ENCODE measurements at regions of chr17 and their contacts with region 1.

Region 1: GRCh38 chr17:35189291-35189690 is 4.9 kb downstream of the SLC35G3 start:
- DNase-seq: peak; percentile 74 to 84 (median 82)
- H3K4me3 ChIP-seq: no peak overlapping the region
- H3K4me3 Mint-ChIP-seq: no peak overlapping the region
- H3K27ac ChIP-seq: peak overlapping the region in 1 of 2 donors; percentile 38
- H3K27ac Mint-ChIP-seq: peak overlapping the region in 3 of 7 donors; percentile 2 to 21 (median 5)
- H3K4me1 ChIP-seq: peaks cover 7 to 30% of the 10 kb centered on the region in 2 donors
- H3K4me1 Mint-ChIP-seq: peaks cover 25% of the 10 kb centered on the region
- H3K27me3 ChIP-seq: peaks cover 0 to 3% of the 10 kb centered on the region in 2 donors
- H3K27me3 Mint-ChIP-seq: peaks cover 9 to 23% (median 16%) of the 10 kb centered on the region in 3 donors
- CTCF ChIP-seq: no peak

Region 2: GRCh38 chr17:35242805-35243560 is 53.7 kb after region 1 on chr17 and contains the start of gene SLFN5:
- intact Hi-C with region 1: loop called in 1 of 2 experiments (anchors 5 kb)
- DNase-seq: peak; percentile 89 to 94 (median 92)
- H3K4me3 ChIP-seq: peak within 1 kb of the TSS; percentile 77 to 94 (median 86)
- H3K4me3 Mint-ChIP-seq: peak within 1 kb of the TSS; percentile 95 to 97
- H3K27ac ChIP-seq: peak within 1 kb of the TSS; percentile 94 to 97
- H3K27ac Mint-ChIP-seq: peak within 1 kb of the TSS; percentile 95 to 99 (median 97)
- H3K4me1 ChIP-seq: peaks cover 30 to 46% of the 10 kb centered on the region in 2 donors
- H3K4me1 Mint-ChIP-seq: peaks cover 41% of the 10 kb centered on the region
- H3K27me3 ChIP-seq: no peaks in the 10 kb centered on the region
- H3K27me3 Mint-ChIP-seq: peaks cover 11 to 15% (median 12%) of the 10 kb centered on the region in 3 donors
- CTCF ChIP-seq: no peak
- polyA plus RNA-seq, gene SLFN5: 2.9 to 8.8 (median 5.3) TPM

Region 3: DNA sequence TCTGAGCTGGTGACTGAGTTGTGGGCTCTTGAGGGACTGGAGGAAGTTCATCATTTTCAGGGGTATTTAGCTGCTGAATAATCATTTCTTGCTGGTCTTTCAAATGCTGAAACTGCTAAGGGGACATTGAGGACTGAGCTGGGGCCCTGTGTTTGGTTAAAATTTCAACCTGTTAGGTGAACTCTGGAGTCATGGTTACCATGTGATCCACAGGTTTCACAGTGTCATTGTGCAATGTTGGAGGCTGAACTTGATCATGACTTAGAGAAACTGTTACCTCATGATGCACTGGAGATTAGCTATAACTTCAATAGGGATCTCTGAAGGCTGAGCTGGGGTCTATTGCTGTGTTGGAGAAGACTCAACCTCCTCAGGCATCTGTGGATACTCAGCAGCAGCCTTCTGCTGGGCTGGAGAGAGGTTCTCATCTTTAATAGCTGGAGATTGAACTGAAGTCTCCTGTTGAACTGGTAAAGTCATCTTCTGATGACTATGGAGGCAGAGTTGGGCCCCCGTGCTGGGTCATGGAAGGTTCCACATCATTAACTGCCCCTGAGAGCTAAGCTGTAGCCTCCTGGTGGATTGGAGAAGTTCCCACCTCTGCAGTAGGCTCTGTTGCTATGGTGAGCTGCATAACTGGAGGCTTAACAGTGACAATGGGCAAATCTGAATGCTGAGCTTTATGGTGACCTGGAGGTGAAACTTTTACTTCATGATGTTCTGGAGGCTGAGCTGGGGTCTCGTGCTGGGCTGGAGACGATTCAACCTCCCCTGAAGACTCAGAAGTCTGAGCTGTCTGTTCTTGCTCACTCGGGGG is 726.1 kb after region 1 on chr17:
- intact Hi-C with region 1: no loop called
- DNase-seq: no peak
- H3K4me3 ChIP-seq: no peak overlapping the region
- H3K4me3 Mint-ChIP-seq: no peak overlapping the region
- H3K27ac ChIP-seq: no peak overlapping the region
- H3K27ac Mint-ChIP-seq: no peak overlapping the region
- H3K4me1 ChIP-seq: no peaks in the 10 kb centered on the region
- H3K4me1 Mint-ChIP-seq: peaks cover 7% of the 10 kb centered on the region
- H3K27me3 ChIP-seq: no peaks in the 10 kb centered on the region
- H3K27me3 Mint-ChIP-seq: peaks cover 0 to 4% (median 0%) of the 10 kb centered on the region in 3 donors
- CTCF ChIP-seq: no peak

Measured in CD14-positive monocyte (primary cell).